B cell (primary cell): ENCODE measurements at regions of chr11 and their contacts with region 1.

Region 1: GRCh38 chr11:65013692-65014145 is 241 bp upstream of the ARL2 start:
- DNase-seq: peak; percentile 96
- ATAC-seq: peak; percentile 80
- H3K4me3 ChIP-seq: peak overlapping the region; percentile 17 to 92 (median 83)
- H3K4me3 Mint-ChIP-seq: peak overlapping the region; percentile 92
- H3K27ac ChIP-seq: peak overlapping the region; percentile 93 to 98
- H3K27ac Mint-ChIP-seq: peak overlapping the region; percentile 98
- H3K4me1 ChIP-seq: peaks cover 9 to 35% of the 10 kb centered on the region in 2 donors
- H3K4me1 Mint-ChIP-seq: peaks cover 23% of the 10 kb centered on the region
- H3K27me3 ChIP-seq: no peaks in the 10 kb centered on the region
- H3K27me3 Mint-ChIP-seq: no peaks in the 10 kb centered on the region
- CTCF ChIP-seq: no peak

Region 2: DNA sequence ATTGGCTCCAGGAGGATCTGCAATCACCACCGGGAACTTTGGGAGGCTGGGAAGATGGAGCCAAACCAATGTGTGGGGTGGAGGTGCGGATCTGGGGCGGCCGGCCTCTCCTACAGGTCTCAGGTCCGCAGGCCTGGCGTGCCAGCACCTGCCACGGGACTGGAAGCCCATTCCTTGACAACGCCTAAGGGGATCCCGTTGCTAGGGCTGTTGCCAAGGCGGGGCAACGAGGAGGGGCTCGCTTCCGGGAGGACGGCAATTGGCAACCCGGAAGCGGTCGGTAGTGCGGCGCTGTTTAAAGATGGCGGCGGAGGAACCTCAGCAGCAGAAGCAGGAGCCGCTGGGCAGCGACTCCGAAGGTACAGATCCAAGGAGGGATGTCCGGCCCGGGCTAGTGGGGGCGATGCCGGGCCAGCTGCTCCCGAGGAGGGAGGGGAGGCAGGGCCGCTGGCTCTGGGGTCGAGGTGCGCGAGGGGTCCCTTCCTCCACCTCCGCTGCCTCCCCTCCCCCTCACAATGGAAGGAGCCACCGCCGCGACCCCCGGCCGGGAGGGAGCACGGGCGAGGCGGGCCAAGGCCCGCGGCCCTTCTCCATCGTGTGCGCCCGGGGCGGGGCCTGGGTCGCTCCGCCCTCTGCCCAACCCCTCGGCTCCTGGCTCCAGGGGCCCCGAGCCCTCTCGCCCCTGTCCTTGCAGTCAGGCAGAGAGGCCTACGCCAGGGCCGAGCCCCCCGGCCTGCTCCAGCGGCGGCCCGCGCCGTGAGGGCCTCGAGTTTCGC is 1027.4 kb before region 1 on chr11 and contains the start of gene OTUB1:
- CTCF ChIA-PET with region 1: no interaction called
- POLR2A ChIA-PET with region 1: no interaction called
- intact Hi-C with region 1: no loop called
- DNase-seq: peak; percentile 89
- ATAC-seq: peak; percentile 84
- H3K4me3 ChIP-seq: peak within 1 kb of the TSS; percentile 76 to 96 (median 93)
- H3K4me3 Mint-ChIP-seq: peak within 1 kb of the TSS; percentile 99
- H3K27ac ChIP-seq: peak within 1 kb of the TSS; percentile 76 to 94
- H3K27ac Mint-ChIP-seq: peak within 1 kb of the TSS; percentile 97
- H3K4me1 ChIP-seq: peaks cover 22 to 39% of the 10 kb centered on the region in 2 donors
- H3K4me1 Mint-ChIP-seq: peaks cover 42% of the 10 kb centered on the region
- H3K27me3 ChIP-seq: no peaks in the 10 kb centered on the region
- H3K27me3 Mint-ChIP-seq: no peaks in the 10 kb centered on the region
- CTCF ChIP-seq: no peak
- total RNA-seq, gene OTUB1: 71.0 and 78.2 TPM in 2 replicates

Region 3: DNA sequence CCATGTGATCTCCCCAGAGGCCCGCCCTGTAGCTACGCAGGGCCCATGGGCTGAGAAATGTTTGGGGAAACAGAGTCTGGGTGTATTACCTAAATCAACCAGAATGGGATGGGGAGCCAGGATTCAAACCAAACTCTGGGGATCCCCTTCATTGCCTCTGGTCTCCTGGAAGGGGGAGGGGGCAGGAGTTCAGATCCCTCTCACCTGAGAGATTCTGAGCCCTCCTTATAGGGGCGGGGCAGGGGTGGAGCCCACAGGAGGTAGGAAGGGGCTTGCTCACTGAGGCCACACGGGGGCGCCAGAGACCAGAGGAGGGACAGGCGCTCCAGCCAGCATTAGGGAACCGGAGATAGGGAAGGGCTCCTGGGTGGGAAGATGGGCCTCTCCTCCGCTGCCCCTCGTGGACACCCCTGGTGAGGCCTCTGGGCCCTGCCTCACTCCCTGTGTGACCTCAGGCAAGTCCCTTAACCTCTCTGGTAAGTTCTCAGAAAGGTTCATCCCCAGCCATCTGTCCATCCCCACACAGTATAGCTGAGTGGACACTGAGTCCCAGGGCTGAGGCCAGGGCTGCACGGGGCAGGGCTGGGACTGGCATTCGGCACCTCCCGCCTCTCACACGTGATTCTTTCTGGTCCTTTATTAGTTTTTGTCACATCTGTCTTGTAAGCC is 166.6 kb before region 1 on chr11:
- CTCF ChIA-PET with region 1: interaction called, 35 read pairs
- POLR2A ChIA-PET with region 1: interaction called, 6 read pairs
- intact Hi-C with region 1: loop called (anchors 1 kb)
- DNase-seq: peak; percentile 92
- ATAC-seq: peak; percentile 20
- H3K4me3 ChIP-seq: no peak overlapping the region
- H3K4me3 Mint-ChIP-seq: peak overlapping the region; percentile 63
- H3K27ac ChIP-seq: peak overlapping the region in 1 of 2 donors; percentile 25
- H3K27ac Mint-ChIP-seq: peak overlapping the region; percentile 75
- H3K4me1 ChIP-seq: peaks cover 53 to 69% of the 10 kb centered on the region in 2 donors
- H3K4me1 Mint-ChIP-seq: peaks cover 61% of the 10 kb centered on the region
- H3K27me3 ChIP-seq: no peaks in the 10 kb centered on the region
- H3K27me3 Mint-ChIP-seq: no peaks in the 10 kb centered on the region
- CTCF ChIP-seq: peak; percentile 97

Region 4: DNA sequence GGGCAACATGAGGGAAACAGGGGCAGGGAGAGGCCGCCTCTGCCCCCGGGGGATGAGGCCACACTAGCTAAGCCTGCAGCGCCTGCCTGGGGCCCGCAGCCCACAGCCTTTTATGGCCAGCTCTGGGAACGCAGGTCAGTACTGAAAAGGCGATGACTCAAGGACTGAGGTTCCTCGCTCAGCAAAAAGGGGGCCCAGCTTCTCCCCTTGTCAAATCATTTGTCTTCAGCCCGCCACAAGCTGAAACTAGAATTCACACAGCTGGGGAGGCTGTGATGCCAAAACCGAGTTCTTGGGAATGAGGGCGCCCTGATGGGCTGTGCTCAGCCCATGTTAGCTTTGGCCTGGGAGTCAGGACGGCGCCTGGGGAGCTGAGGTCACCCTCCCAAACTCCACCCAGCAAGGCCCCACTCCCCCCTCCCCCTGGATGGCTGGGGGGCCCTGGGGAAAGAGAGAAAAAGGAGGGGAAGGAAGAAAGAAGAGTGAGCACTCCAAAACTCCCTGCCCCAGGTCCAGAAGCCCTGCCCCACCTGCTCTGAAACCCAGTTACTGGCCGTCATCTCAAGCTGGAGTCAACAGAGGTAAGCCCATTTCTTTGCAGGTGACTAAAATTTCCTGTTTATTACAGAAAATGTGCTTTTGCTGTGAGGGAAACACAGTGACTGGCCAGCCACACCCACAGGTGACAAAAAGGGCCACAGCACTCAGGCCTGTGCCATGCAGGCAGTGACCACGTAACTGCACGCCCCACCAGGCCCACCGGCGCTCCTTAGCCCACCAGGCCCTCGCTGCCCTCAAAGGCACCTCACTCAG is 149.0 kb before region 1 on chr11:
- CTCF ChIA-PET with region 1: no interaction called
- POLR2A ChIA-PET with region 1: no interaction called
- intact Hi-C with region 1: no loop called
- DNase-seq: peak; percentile 43
- ATAC-seq: no peak
- H3K4me3 ChIP-seq: peak overlapping the region in 3 of 5 experiments; percentile 25 to 40 (median 28)
- H3K4me3 Mint-ChIP-seq: peak overlapping the region; percentile 77
- H3K27ac ChIP-seq: peak overlapping the region; percentile 74 to 87
- H3K27ac Mint-ChIP-seq: peak overlapping the region; percentile 90
- H3K4me1 ChIP-seq: peaks cover 93 to 99% of the 10 kb centered on the region in 2 donors
- H3K4me1 Mint-ChIP-seq: peaks cover 90% of the 10 kb centered on the region
- H3K27me3 ChIP-seq: no peaks in the 10 kb centered on the region
- H3K27me3 Mint-ChIP-seq: no peaks in the 10 kb centered on the region
- CTCF ChIP-seq: no peak

Region 5: GRCh38 chr11:64971421-64972233 is 42.1 kb before region 1 on chr11 and contains the start of gene MAJIN:
- CTCF ChIA-PET with region 1: interaction called, 5 read pairs
- POLR2A ChIA-PET with region 1: no interaction called
- intact Hi-C with region 1: loop called (anchors 1 kb)
- DNase-seq: peak; percentile 92
- ATAC-seq: peak; percentile 78
- H3K4me3 ChIP-seq: peak within 1 kb of the TSS; percentile 40 to 67 (median 50)
- H3K4me3 Mint-ChIP-seq: peak within 1 kb of the TSS; percentile 82
- H3K27ac ChIP-seq: peak within 1 kb of the TSS; percentile 61 to 73
- H3K27ac Mint-ChIP-seq: peak within 1 kb of the TSS; percentile 79
- H3K4me1 ChIP-seq: peaks cover 31 to 40% of the 10 kb centered on the region in 2 donors
- H3K4me1 Mint-ChIP-seq: peaks cover 27% of the 10 kb centered on the region
- H3K27me3 ChIP-seq: peaks cover 0 to 3% (median 1%) of the 10 kb centered on the region in 4 experiments
- H3K27me3 Mint-ChIP-seq: peaks cover 3% of the 10 kb centered on the region
- CTCF ChIP-seq: no peak
- total RNA-seq, gene MAJIN: 0.71 and 0.95 TPM in 2 replicates

Region 6: DNA sequence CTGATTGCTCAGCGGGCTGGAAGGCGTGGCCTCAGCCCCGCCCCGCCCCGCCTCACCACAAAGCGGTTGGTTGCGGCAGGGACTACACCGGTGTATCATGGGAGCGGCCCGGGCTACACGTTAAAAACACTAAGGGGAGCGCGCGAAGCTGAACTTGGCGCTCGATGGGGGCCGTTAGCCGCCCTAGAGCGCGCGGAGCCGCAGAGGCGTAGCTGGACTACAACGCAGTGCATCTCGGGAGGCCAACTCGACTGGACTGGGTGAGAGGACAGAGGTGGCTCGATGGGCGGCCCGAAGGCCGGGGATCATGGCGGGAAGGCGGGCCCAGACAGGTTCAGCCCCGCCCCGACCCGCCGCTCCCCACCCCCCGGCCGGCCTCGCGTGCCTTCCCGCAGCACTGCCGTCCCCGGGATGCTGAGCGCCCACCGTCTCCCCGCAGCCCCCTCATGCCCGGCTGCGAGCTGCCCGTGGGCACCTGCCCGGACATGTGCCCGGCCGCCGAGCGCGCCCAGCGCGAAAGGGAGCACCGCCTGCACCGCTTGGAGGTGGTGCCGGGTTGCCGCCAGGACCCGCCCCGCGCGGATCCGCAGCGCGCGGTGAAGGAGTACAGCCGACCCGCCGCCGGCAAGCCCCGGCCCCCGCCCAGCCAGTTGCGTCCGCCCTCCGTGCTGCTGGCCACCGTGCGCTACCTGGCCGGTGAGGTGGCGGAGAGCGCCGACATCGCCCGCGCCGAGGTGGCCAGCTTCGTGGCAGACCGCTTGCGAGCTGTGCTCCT is 27.3 kb after region 1 on chr11 and contains the start of gene SAC3D1:
- CTCF ChIA-PET with region 1: interaction called, 8 read pairs
- POLR2A ChIA-PET with region 1: no interaction called
- intact Hi-C with region 1: loop called (anchors 1 kb)
- DNase-seq: peak; percentile 92
- ATAC-seq: peak; percentile 94
- H3K4me3 ChIP-seq: peak within 1 kb of the TSS; percentile 50 to 80 (median 75)
- H3K4me3 Mint-ChIP-seq: peak within 1 kb of the TSS; percentile 95
- H3K27ac ChIP-seq: peak within 1 kb of the TSS; percentile 67 to 72
- H3K27ac Mint-ChIP-seq: peak within 1 kb of the TSS; percentile 96
- H3K4me1 ChIP-seq: peaks cover 7 to 22% of the 10 kb centered on the region in 2 donors
- H3K4me1 Mint-ChIP-seq: peaks cover 14% of the 10 kb centered on the region
- H3K27me3 ChIP-seq: no peaks in the 10 kb centered on the region
- H3K27me3 Mint-ChIP-seq: no peaks in the 10 kb centered on the region
- CTCF ChIP-seq: no peak
- total RNA-seq, gene SAC3D1: 5.9 and 7.5 TPM in 2 replicates

Region 7: DNA sequence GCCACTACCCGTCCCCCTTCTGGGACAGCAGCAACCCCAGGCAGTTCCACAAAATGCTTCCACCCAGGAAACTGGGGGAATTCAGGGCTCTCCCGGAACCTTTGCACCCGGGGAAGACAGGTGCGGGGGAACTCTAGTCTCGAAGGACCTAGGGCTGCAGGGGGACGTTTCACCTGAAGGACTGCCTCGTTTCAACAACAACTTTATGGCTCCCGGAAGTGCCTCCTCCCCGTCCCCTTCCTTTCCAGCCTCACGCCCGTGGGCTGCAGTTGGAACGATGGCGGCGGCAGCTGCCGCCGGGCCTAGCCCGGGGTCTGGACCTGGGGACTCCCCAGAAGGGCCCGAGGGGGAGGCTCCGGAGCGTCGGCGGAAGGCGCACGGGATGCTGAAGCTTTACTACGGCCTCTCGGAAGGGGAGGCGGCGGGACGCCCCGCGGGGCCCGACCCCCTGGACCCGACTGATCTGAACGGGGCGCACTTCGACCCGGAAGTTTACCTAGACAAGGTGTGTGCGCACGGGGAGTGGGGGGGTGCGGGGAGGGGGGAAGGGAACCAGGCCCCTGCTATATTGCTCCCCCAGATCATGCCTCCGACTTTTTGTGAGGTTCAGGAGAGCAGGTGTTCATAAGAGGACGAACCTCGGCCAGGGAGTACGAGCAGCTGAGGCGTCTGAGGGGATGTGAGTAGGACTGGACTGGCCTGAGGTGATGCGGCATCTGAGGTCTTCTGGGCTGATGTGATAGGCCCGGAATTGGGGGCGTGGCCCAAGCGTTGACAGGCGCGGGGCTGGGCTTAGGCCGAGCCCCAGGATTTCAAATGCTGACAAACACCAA is 82.5 kb after region 1 on chr11 and contains the start of gene VPS51:
- CTCF ChIA-PET with region 1: interaction called, 7 read pairs
- POLR2A ChIA-PET with region 1: interaction called, 3 read pairs
- intact Hi-C with region 1: loop called (anchors 1 kb)
- DNase-seq: peak; percentile 93
- ATAC-seq: peak; percentile 86
- H3K4me3 ChIP-seq: peak within 1 kb of the TSS; percentile 69 to 90 (median 77)
- H3K4me3 Mint-ChIP-seq: peak within 1 kb of the TSS; percentile 96
- H3K27ac ChIP-seq: peak within 1 kb of the TSS; percentile 77 to 81
- H3K27ac Mint-ChIP-seq: peak within 1 kb of the TSS; percentile 97
- H3K4me1 ChIP-seq: peaks cover 10 to 16% of the 10 kb centered on the region in 2 donors
- H3K4me1 Mint-ChIP-seq: peaks cover 24% of the 10 kb centered on the region
- H3K27me3 ChIP-seq: no peaks in the 10 kb centered on the region
- H3K27me3 Mint-ChIP-seq: no peaks in the 10 kb centered on the region
- CTCF ChIP-seq: no peak
- total RNA-seq, gene VPS51: 223 and 225 TPM in 2 replicates

Region 8: GRCh38 chr11:65180877-65181568 is 167.3 kb after region 1 on chr11:
- CTCF ChIA-PET with region 1: interaction called, 16 read pairs
- POLR2A ChIA-PET with region 1: no interaction called
- intact Hi-C with region 1: loop called (anchors 1 kb)
- DNase-seq: peak; percentile 87
- ATAC-seq: peak; percentile 84
- H3K4me3 ChIP-seq: peak overlapping the region; percentile 58 to 91 (median 80)
- H3K4me3 Mint-ChIP-seq: peak overlapping the region; percentile 97
- H3K27ac ChIP-seq: peak overlapping the region; percentile 58 to 64
- H3K27ac Mint-ChIP-seq: peak overlapping the region; percentile 96
- H3K4me1 ChIP-seq: peaks cover 16 to 24% of the 10 kb centered on the region in 2 donors
- H3K4me1 Mint-ChIP-seq: peaks cover 24% of the 10 kb centered on the region
- H3K27me3 ChIP-seq: no peaks in the 10 kb centered on the region
- H3K27me3 Mint-ChIP-seq: no peaks in the 10 kb centered on the region
- CTCF ChIP-seq: peak; percentile 61